ENCODE measurements at regions of chr3 and their contacts with region 1.

Region 1: GRCh38 chr3:128879125-128879969 is at the start of gene ACAD9:
- DNase-seq: peak; percentile 94 to 100 (median 96)
- ATAC-seq: peak; percentile 95
- H3K4me3 ChIP-seq: peak within 1 kb of the TSS; percentile 74
- H3K4me3 Mint-ChIP-seq: peak within 1 kb of the TSS; percentile 80 to 98 (median 89)
- H3K27ac ChIP-seq: peak within 1 kb of the TSS; percentile 97
- H3K27ac Mint-ChIP-seq: peak within 1 kb of the TSS; percentile 92 to 98 (median 97)
- H3K4me1 ChIP-seq: peaks cover 19 to 43% of the 10 kb centered on the region in 2 donors
- H3K4me1 Mint-ChIP-seq: peaks cover 40 to 83% (median 77%) of the 10 kb centered on the region in 7 donors
- H3K27me3 ChIP-seq: no peaks in the 10 kb centered on the region
- H3K27me3 Mint-ChIP-seq: peaks cover 0 to 6% (median 0%) of the 10 kb centered on the region in 5 donors
- total RNA-seq, gene ACAD9: 40.3 to 74.0 (median 63.0) TPM

Region 2: DNA sequence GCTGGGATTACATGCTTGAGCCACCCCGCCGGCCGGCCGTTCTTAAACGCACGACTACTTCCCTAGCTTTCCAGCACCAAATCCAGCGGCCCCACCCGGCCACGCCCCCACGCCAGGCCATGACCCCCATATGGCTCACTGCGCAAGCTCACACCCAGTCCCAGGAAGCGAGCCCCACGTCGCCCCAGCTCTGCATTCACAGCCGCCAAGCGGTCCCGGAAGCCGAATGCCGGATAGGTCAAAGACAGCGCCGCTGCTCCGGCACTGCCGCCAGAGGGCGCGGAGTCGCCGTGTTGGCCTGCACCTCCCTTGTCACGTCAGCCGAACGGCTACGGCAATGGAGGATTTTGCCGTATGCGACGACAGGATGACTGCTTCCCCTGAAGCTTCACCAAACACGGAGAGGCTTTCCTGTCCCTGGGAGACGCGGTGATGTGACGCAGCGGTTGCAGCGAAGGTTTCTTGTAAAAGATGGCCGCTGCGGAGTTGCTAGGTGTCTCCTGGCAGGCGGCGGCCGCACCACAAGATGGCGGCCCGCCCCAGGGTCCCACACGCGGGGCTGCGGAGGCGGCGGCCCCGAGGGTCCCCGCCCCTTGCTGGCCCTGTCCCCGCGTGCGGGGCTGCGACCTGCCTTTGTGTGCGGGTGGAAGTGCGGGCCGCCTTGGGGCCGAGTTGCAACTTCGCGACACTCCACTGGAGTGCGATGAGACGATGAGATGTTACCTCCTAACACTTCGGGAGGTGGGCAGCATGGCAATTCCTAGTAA is 198.6 kb before region 1 on chr3:
- CTCF ChIA-PET with region 1: interaction called, 4 read pairs
- POLR2A ChIA-PET with region 1: interaction called, 18 read pairs
- intact Hi-C with region 1: loop called (anchors 1 kb)
- DNase-seq: peak; percentile 94 to 98 (median 95)
- ATAC-seq: peak; percentile 95
- H3K4me3 ChIP-seq: peak overlapping the region; percentile 91
- H3K4me3 Mint-ChIP-seq: peak overlapping the region; percentile 84 to 98 (median 94)
- H3K27ac ChIP-seq: peak overlapping the region; percentile 92
- H3K27ac Mint-ChIP-seq: peak overlapping the region; percentile 95 to 100 (median 99)
- H3K4me1 ChIP-seq: peaks cover 11 to 14% of the 10 kb centered on the region in 2 donors
- H3K4me1 Mint-ChIP-seq: peaks cover 17 to 50% (median 38%) of the 10 kb centered on the region in 7 donors
- H3K27me3 ChIP-seq: no peaks in the 10 kb centered on the region
- H3K27me3 Mint-ChIP-seq: no peaks in the 10 kb centered on the region

Region 3: DNA sequence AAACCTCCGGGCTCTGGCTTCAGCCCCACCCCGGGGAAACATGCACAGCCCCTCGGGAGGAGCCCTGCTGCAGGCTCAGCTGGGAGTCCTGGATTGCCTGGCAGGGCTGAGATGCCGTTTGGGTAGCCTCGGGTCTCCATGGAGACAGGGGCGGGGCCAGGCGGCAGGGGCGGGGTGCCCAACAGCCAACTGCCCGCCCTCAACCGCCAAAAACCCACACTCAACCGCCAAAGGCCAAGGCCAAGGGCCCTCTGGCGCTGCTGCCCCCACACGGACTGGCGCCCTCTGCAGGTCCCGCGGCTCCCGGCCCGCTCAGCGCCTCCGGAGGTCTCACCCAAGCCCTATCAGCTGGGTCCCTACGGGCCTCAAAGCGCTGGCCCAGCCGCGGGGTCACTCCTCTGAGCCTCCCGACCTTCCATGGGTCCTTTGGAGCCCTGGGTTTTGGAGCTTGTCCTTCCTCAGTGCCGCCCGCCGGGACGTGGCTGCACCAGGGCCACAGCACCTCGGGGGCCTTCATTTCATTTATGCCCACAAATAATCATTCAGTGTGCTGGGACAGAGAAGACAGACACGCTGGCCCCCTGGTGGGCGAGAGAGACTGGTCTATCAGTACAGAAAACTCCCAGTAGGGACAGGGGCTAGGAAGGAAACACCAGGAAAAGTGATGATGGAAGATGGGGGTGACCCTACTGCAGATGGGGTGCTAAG is 33.4 kb before region 1 on chr3:
- CTCF ChIA-PET with region 1: interaction called, 3 read pairs
- POLR2A ChIA-PET with region 1: interaction called, 3 read pairs
- intact Hi-C with region 1: loop called in 1 of 2 experiments (anchors 2 kb)
- DNase-seq: peak; percentile 61 to 87 (median 74)
- ATAC-seq: peak; percentile 85
- H3K4me3 ChIP-seq: peak overlapping the region; percentile 65
- H3K4me3 Mint-ChIP-seq: peak overlapping the region; percentile 65 to 88 (median 82)
- H3K27ac ChIP-seq: peak overlapping the region; percentile 64
- H3K27ac Mint-ChIP-seq: peak overlapping the region; percentile 64 to 93 (median 81)
- H3K4me1 ChIP-seq: peaks cover 0 to 14% of the 10 kb centered on the region in 2 donors
- H3K4me1 Mint-ChIP-seq: peaks cover 11 to 22% (median 17%) of the 10 kb centered on the region in 7 donors
- H3K27me3 ChIP-seq: no peaks in the 10 kb centered on the region
- H3K27me3 Mint-ChIP-seq: peaks cover 0 to 2% (median 0%) of the 10 kb centered on the region in 5 donors

Region 4: GRCh38 chr3:128969993-128970739 is 90.8 kb after region 1 on chr3:
- CTCF ChIA-PET with region 1: interaction called, 6 read pairs
- POLR2A ChIA-PET with region 1: no interaction called
- intact Hi-C with region 1: loop called in 1 of 2 experiments (anchors 1 kb)
- DNase-seq: peak; percentile 43 to 75 (median 64)
- ATAC-seq: peak; percentile 89
- H3K4me3 ChIP-seq: no peak overlapping the region
- H3K4me3 Mint-ChIP-seq: peak overlapping the region in 1 of 10 donors; percentile 11
- H3K27ac ChIP-seq: no peak overlapping the region
- H3K27ac Mint-ChIP-seq: no peak overlapping the region
- H3K4me1 ChIP-seq: no peaks in the 10 kb centered on the region
- H3K4me1 Mint-ChIP-seq: peaks cover 0 to 7% (median 6%) of the 10 kb centered on the region in 7 donors
- H3K27me3 ChIP-seq: no peaks in the 10 kb centered on the region
- H3K27me3 Mint-ChIP-seq: peaks cover 0 to 5% (median 0%) of the 10 kb centered on the region in 5 donors

Region 5: GRCh38 chr3:129183569-129184395 is 304.4 kb after region 1 on chr3 and contains the start of gene CNBP:
- CTCF ChIA-PET with region 1: no interaction called
- POLR2A ChIA-PET with region 1: no interaction called
- intact Hi-C with region 1: loop called in 1 of 2 experiments (anchors 1 kb)
- DNase-seq: peak; percentile 90 to 96 (median 94)
- ATAC-seq: peak; percentile 100
- H3K4me3 ChIP-seq: peak within 1 kb of the TSS; percentile 74
- H3K4me3 Mint-ChIP-seq: peak within 1 kb of the TSS; percentile 93 to 99 (median 96)
- H3K27ac ChIP-seq: peak within 1 kb of the TSS; percentile 100
- H3K27ac Mint-ChIP-seq: peak within 1 kb of the TSS; percentile 91 to 99 (median 97)
- H3K4me1 ChIP-seq: peaks cover 18 to 27% of the 10 kb centered on the region in 2 donors
- H3K4me1 Mint-ChIP-seq: peaks cover 32 to 48% (median 42%) of the 10 kb centered on the region in 7 donors
- H3K27me3 ChIP-seq: no peaks in the 10 kb centered on the region
- H3K27me3 Mint-ChIP-seq: no peaks in the 10 kb centered on the region
- total RNA-seq, gene CNBP: 259 to 366 (median 327) TPM

Region 6: DNA sequence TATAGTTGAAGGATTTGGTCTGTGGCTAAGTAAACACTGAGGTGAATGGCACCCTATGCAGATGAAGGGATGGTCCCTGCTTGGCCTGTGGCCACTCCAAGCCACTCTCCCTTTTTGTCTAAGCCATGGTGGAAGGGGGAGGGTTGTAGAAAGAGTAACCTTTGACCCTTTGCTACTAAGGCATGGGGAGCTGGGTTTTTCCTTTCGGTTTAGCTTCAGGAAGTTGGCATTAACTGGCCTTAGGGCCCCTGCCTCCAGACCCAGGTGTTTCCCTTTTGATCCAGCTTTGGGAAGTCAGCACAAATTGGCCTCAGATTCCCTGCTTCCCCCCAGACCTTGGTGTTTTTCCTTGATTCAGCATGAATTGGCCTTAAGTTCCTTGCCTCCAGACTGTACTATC is 499.6 kb after region 1 on chr3:
- CTCF ChIA-PET with region 1: no interaction called
- POLR2A ChIA-PET with region 1: no interaction called
- intact Hi-C with region 1: no loop called
- DNase-seq: no peak
- ATAC-seq: no peak
- H3K4me3 ChIP-seq: no peak overlapping the region
- H3K4me3 Mint-ChIP-seq: no peak overlapping the region
- H3K27ac ChIP-seq: no peak overlapping the region
- H3K27ac Mint-ChIP-seq: no peak overlapping the region
- H3K4me1 ChIP-seq: no peaks in the 10 kb centered on the region
- H3K4me1 Mint-ChIP-seq: peaks cover 0 to 4% (median 0%) of the 10 kb centered on the region in 7 donors
- H3K27me3 ChIP-seq: no peaks in the 10 kb centered on the region
- H3K27me3 Mint-ChIP-seq: no peaks in the 10 kb centered on the region

Region 7: GRCh38 chr3:130658678-130659077 is 1779.3 kb after region 1 on chr3:
- CTCF ChIA-PET with region 1: no interaction called
- POLR2A ChIA-PET with region 1: no interaction called
- intact Hi-C with region 1: no loop called
- DNase-seq: no peak
- ATAC-seq: no peak
- H3K4me3 ChIP-seq: no peak overlapping the region
- H3K4me3 Mint-ChIP-seq: no peak overlapping the region
- H3K27ac ChIP-seq: no peak overlapping the region
- H3K27ac Mint-ChIP-seq: no peak overlapping the region
- H3K4me1 ChIP-seq: no peaks in the 10 kb centered on the region
- H3K4me1 Mint-ChIP-seq: no peaks in the 10 kb centered on the region
- H3K27me3 ChIP-seq: no peaks in the 10 kb centered on the region
- H3K27me3 Mint-ChIP-seq: no peaks in the 10 kb centered on the region

Measured in naive thymus-derived CD4-positive, alpha-beta T cell (primary cell).